ENCODE measurements at regions of chr11 and their contacts with region 1.

Region 1: DNA sequence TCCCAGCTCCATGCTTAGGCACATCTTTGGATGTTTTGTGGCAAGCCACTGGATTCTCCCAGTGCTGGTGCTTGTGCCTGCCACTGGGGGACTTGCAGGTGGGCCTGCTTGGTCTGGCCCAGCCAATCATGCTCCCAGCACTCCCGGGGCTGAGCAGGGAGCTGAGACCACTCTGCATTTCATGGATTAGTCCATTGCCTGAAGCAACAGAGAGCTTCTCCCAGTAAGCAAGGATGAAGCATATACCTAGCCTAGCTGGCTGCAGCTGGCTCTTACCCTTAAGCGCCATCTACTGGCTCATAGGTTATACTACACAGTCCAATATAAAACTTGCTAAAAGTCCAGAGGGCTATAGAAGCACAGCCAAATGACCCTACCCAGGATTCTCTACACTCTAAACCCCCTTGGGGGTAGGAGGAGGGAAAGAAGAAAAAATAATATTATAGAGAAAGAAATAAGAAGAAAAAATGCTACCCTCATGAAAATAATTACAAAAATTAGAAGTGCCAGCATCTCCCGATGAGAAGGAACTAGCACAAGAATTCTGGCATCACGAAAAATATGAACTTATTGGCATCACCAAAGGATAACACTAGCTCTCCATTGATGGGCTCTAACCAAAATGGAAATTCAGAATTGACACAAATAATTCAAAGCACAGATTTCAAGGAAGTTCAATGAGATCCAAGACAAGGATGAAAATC is 275.3 kb downstream of the C11orf87 start:
- DNase-seq: peak; percentile 64
- H3K4me3 ChIP-seq: no peak overlapping the region
- H3K27ac ChIP-seq: peak overlapping the region; percentile 97
- H3K4me1 ChIP-seq: peaks cover 15% of the 10 kb centered on the region
- H3K27me3 ChIP-seq: no peaks in the 10 kb centered on the region
- CTCF ChIP-seq: peak; percentile 75 to 85

Region 2: GRCh38 chr11:108697872-108698473 is 999.3 kb before region 1 on chr11:
- CTCF ChIA-PET with region 1: interaction called, 6 read pairs
- dilution Hi-C with region 1: no loop called
- in situ Hi-C with region 1: loop called in 1 of 2 experiments (anchors 5 kb)
- intact Hi-C with region 1: loop called (anchors 1 kb)
- DNase-seq: peak; percentile 61
- H3K4me3 ChIP-seq: no peak overlapping the region
- H3K27ac ChIP-seq: peak overlapping the region; percentile 65
- H3K4me1 ChIP-seq: peaks cover 27% of the 10 kb centered on the region
- H3K27me3 ChIP-seq: no peaks in the 10 kb centered on the region
- CTCF ChIP-seq: peak; percentile 99

Region 3: DNA sequence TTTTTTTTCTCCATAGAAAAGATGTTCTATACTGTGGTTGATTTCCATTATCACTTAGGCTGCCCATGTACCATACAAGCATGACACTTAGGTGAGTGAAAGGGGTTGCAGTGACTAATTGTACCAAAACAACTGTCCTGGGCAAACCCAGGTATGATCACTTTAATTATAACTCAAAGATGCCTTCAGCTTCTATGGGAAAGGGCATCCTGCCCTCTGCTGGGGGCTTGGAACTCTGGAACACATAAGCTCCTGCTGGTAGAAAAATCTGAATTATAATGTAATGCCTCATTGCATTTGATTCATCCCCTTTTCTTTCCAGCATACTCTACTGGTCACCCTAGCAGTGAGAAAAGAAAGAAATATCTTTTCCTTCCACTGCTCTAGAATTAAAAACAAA is 826.1 kb before region 1 on chr11:
- CTCF ChIA-PET with region 1: no interaction called
- dilution Hi-C with region 1: no loop called
- in situ Hi-C with region 1: no loop called
- intact Hi-C with region 1: loop called (anchors 2 kb)
- DNase-seq: peak; percentile 56
- H3K4me3 ChIP-seq: no peak overlapping the region
- H3K27ac ChIP-seq: no peak overlapping the region
- H3K4me1 ChIP-seq: peaks cover 15% of the 10 kb centered on the region
- H3K27me3 ChIP-seq: no peaks in the 10 kb centered on the region
- CTCF ChIP-seq: peak; percentile 40 to 59

Region 4: GRCh38 chr11:109247071-109247470 is 450.2 kb before region 1 on chr11:
- CTCF ChIA-PET with region 1: no interaction called
- dilution Hi-C with region 1: no loop called
- in situ Hi-C with region 1: no loop called
- intact Hi-C with region 1: loop called (anchors 10 kb)
- DNase-seq: peak; percentile 75
- H3K4me3 ChIP-seq: no peak overlapping the region
- H3K27ac ChIP-seq: peak overlapping the region; percentile 39
- H3K4me1 ChIP-seq: peaks cover 18% of the 10 kb centered on the region
- H3K27me3 ChIP-seq: no peaks in the 10 kb centered on the region
- CTCF ChIP-seq: no peak

Region 5: GRCh38 chr11:109422870-109423465 is 274.3 kb before region 1 on chr11:
- CTCF ChIA-PET with region 1: interaction called, 8 read pairs
- dilution Hi-C with region 1: no loop called
- in situ Hi-C with region 1: no loop called
- intact Hi-C with region 1: loop called (anchors 1 kb)
- DNase-seq: peak; percentile 20
- H3K4me3 ChIP-seq: peak overlapping the region; percentile 40 to 47 (median 44)
- H3K27ac ChIP-seq: no peak overlapping the region
- H3K4me1 ChIP-seq: peaks cover 18% of the 10 kb centered on the region
- H3K27me3 ChIP-seq: peaks cover 19% of the 10 kb centered on the region
- CTCF ChIP-seq: no peak

Region 6: DNA sequence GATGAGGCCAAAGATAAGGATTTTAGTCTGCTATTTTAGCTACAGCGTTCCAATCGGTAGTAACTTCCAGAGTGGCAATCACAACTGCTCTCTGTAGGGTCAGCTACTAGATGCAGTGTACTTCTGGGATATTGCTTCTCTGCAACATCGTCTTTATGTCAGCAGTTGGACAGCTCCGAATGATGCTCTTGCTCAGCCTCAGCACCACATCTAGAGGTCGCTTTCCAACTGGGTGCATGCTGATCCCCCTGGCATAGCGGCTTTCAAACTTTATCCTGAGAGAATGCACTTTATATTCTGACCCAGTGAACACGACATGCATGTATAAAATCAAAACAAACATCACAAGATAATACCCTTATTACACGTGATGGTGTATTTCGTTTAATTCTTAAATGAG is 55.7 kb before region 1 on chr11:
- CTCF ChIA-PET with region 1: no interaction called
- dilution Hi-C with region 1: no loop called
- in situ Hi-C with region 1: no loop called
- intact Hi-C with region 1: loop called (anchors 2 kb)
- DNase-seq: peak; percentile 50
- H3K4me3 ChIP-seq: no peak overlapping the region
- H3K27ac ChIP-seq: no peak overlapping the region
- H3K4me1 ChIP-seq: no peaks in the 10 kb centered on the region
- H3K27me3 ChIP-seq: no peaks in the 10 kb centered on the region
- CTCF ChIP-seq: peak; percentile 26 to 55

Region 7: GRCh38 chr11:109783842-109784241 is 86.5 kb after region 1 on chr11:
- CTCF ChIA-PET with region 1: no interaction called
- dilution Hi-C with region 1: no loop called
- in situ Hi-C with region 1: no loop called
- intact Hi-C with region 1: no loop called
- DNase-seq: no peak
- H3K4me3 ChIP-seq: no peak overlapping the region
- H3K27ac ChIP-seq: no peak overlapping the region
- H3K4me1 ChIP-seq: no peaks in the 10 kb centered on the region
- H3K27me3 ChIP-seq: no peaks in the 10 kb centered on the region
- CTCF ChIP-seq: no peak